CD4-positive, alpha-beta T cell (primary cell): ENCODE measurements at regions of chr4 and their contacts with region 1.

Region 1: GRCh38 chr4:17324386-17324830 is 187.5 kb downstream of the QDPR start:
- DNase-seq: peak in 13 of 14 experiments; percentile 11 to 67 (median 33)
- ATAC-seq: peak; percentile 68
- H3K4me3 ChIP-seq: no peak overlapping the region
- H3K4me3 Mint-ChIP-seq: peak overlapping the region; percentile 50
- H3K27ac ChIP-seq: no peak overlapping the region
- H3K27ac Mint-ChIP-seq: no peak overlapping the region
- H3K4me1 ChIP-seq: peaks cover 8% of the 10 kb centered on the region
- H3K4me1 Mint-ChIP-seq: peaks cover 11% of the 10 kb centered on the region
- H3K27me3 ChIP-seq: no peaks in the 10 kb centered on the region
- H3K27me3 Mint-ChIP-seq: no peaks in the 10 kb centered on the region
- CTCF ChIP-seq: peak; percentile 63

Region 2: GRCh38 chr4:16289897-16290554 is 1034.4 kb before region 1 on chr4:
- CTCF ChIA-PET with region 1: interaction called, 3 read pairs
- POLR2A ChIA-PET with region 1: no interaction called
- intact Hi-C with region 1: loop called in 1 of 2 experiments (anchors 5 kb)
- DNase-seq: peak in 3 of 14 experiments; percentile 7 to 40 (median 33)
- ATAC-seq: no peak
- H3K4me3 ChIP-seq: no peak overlapping the region
- H3K4me3 Mint-ChIP-seq: no peak overlapping the region
- H3K27ac ChIP-seq: no peak overlapping the region
- H3K27ac Mint-ChIP-seq: no peak overlapping the region
- H3K4me1 ChIP-seq: no peaks in the 10 kb centered on the region
- H3K4me1 Mint-ChIP-seq: peaks cover 4% of the 10 kb centered on the region
- H3K27me3 ChIP-seq: peaks cover 0 to 9% of the 10 kb centered on the region in 2 experiments
- H3K27me3 Mint-ChIP-seq: peaks cover 25% of the 10 kb centered on the region
- CTCF ChIP-seq: peak; percentile 69

Region 3: GRCh38 chr4:16794816-16795445 is 529.5 kb before region 1 on chr4:
- CTCF ChIA-PET with region 1: no interaction called
- POLR2A ChIA-PET with region 1: no interaction called
- intact Hi-C with region 1: loop called in 1 of 2 experiments (anchors 10 kb)
- DNase-seq: peak in 9 of 14 experiments; percentile 0 to 35 (median 5)
- ATAC-seq: no peak
- H3K4me3 ChIP-seq: no peak overlapping the region
- H3K4me3 Mint-ChIP-seq: no peak overlapping the region
- H3K27ac ChIP-seq: no peak overlapping the region
- H3K27ac Mint-ChIP-seq: no peak overlapping the region
- H3K4me1 ChIP-seq: no peaks in the 10 kb centered on the region
- H3K4me1 Mint-ChIP-seq: no peaks in the 10 kb centered on the region
- H3K27me3 ChIP-seq: no peaks in the 10 kb centered on the region
- H3K27me3 Mint-ChIP-seq: no peaks in the 10 kb centered on the region
- CTCF ChIP-seq: peak; percentile 36

Region 4: DNA sequence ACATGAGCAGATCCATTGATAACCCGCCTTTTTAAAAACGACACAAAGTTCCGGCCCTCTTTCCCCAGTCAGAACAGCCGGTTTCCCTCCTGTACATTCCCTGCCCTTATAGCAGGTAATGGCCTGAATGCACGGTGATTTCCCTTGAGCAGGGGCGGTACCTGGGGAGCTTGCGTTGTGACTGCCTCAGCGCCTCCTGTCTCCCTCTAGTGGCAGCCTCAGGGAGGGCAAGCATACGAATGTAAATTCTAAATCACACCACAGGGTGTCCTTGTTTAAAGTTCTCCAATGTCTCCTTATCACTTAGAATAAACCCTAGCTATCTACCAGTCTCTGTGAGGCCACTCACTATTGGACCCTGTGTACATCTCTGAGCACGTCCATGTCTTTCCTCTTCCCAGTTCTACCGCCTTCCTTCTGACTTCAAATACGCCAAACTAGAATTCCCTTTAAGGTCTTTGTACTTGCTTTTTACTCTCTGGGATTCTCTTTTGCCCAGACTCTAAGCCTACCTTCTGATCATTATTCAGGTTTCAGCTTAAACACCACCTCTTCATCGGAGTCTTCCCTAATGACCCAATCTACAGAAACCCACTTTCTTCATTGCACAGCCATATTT is 407.6 kb before region 1 on chr4:
- CTCF ChIA-PET with region 1: no interaction called
- POLR2A ChIA-PET with region 1: no interaction called
- intact Hi-C with region 1: loop called in 1 of 2 experiments (anchors 10 kb)
- DNase-seq: peak; percentile 39 to 78 (median 48)
- ATAC-seq: peak; percentile 90
- H3K4me3 ChIP-seq: no peak overlapping the region
- H3K4me3 Mint-ChIP-seq: no peak overlapping the region
- H3K27ac ChIP-seq: no peak overlapping the region
- H3K27ac Mint-ChIP-seq: no peak overlapping the region
- H3K4me1 ChIP-seq: no peaks in the 10 kb centered on the region
- H3K4me1 Mint-ChIP-seq: no peaks in the 10 kb centered on the region
- H3K27me3 ChIP-seq: no peaks in the 10 kb centered on the region
- H3K27me3 Mint-ChIP-seq: no peaks in the 10 kb centered on the region
- CTCF ChIP-seq: peak; percentile 75

Region 5: DNA sequence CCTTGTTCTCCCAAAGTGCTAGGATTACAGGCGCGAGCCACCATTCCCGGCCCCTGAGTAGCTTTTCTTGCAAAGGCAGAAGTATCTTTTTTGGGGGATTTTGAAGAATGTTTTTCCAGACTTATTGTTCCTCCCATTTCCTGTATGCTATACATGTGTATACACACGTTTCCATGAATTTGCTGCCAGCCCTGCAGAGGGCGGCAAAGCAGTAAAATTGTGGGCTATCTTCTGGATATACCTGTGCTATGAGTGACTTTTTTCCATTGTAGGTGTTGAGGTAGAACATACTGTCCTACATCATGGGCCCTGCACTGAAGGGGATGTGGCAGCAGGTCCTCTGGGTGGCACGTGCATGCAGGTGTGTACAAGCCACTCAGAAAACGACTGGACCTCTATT is 273.1 kb after region 1 on chr4:
- CTCF ChIA-PET with region 1: no interaction called
- POLR2A ChIA-PET with region 1: no interaction called
- intact Hi-C with region 1: no loop called
- DNase-seq: peak in 1 of 14 experiments; percentile 12
- ATAC-seq: no peak
- H3K4me3 ChIP-seq: no peak overlapping the region
- H3K4me3 Mint-ChIP-seq: no peak overlapping the region
- H3K27ac ChIP-seq: no peak overlapping the region
- H3K27ac Mint-ChIP-seq: no peak overlapping the region
- H3K4me1 ChIP-seq: no peaks in the 10 kb centered on the region
- H3K4me1 Mint-ChIP-seq: no peaks in the 10 kb centered on the region
- H3K27me3 ChIP-seq: no peaks in the 10 kb centered on the region
- H3K27me3 Mint-ChIP-seq: no peaks in the 10 kb centered on the region
- CTCF ChIP-seq: no peak